ENCODE measurements at regions of chr6 and their contacts with region 1.

Region 1: GRCh38 chr6:152863618-152864326 is 113.2 kb downstream of the VIP start:
- DNase-seq: no peak
- ATAC-seq: peak; percentile 78

Region 2: DNA sequence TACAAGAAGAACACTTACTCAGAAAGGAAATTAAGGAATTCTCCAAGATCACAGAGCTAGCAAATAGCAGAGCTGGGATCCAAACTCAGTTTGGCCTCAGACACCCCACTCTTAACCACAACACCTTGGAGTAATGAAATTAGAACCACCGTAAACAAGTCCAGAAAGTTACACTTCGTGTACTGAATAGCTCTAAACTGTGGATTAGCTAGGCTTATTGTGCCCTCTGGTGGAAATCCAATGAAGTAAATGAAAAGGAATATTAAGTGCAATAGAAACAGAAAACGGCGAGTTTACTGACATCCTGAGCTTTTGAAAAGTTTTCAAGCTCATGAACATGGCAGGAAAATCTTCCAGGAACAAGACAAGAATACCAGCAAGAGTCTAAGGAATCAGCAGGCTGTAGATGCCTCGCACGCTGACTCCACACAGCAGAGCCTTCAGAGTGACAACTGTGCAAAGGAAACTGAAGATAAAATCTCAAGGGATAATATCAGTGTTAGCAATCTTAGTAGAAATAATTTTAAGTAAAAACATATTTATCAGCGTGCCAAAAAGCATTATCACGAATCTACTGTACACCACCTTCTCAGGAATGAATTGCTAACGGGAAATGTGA is 84.5 kb after region 1 on chr6:
- intact Hi-C with region 1: loop called (anchors 2 kb)
- DNase-seq: no peak
- ATAC-seq: peak; percentile 77

Region 3: DNA sequence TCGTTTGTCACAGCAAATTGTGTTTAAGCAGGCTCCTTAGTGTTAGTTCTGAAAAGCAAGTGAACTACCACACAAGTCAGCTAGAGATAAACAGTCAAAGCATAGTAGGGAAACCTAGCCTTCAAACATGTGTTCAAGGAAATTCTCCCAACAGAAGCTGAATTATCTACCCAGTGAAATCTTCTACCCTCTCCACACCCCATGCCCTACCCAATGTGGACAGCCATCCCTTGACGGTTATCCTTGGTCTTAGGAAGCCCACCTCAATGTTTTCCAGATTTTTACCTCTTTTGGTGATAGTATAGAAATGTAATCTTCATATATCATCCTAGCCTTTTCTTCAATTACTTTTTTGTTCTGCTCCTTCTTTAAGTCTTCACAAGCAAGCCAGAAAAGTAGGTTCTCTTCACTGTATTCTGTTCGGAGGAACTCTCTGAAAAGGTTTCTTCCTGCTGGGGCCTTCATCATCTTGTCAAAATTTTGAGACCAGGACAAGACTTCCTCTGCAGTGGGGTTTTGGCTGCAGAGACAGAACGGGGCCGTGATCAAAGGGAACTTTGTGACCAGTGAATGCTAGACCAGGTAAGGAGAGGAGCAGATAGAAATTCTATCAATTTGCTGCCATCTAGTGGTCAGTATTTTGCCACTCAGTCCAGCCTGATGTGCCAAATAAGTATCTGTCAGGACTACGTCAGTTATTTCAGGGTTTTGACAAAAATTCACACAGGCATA is 160.4 kb after region 1 on chr6:
- intact Hi-C with region 1: loop called (anchors 5 kb)
- DNase-seq: no peak
- ATAC-seq: peak; percentile 81

Measured in left ventricle myocardium superior (tissue), 1 donor.